ENCODE measurements at regions of chr12 and their contacts with region 1.

Region 1: DNA sequence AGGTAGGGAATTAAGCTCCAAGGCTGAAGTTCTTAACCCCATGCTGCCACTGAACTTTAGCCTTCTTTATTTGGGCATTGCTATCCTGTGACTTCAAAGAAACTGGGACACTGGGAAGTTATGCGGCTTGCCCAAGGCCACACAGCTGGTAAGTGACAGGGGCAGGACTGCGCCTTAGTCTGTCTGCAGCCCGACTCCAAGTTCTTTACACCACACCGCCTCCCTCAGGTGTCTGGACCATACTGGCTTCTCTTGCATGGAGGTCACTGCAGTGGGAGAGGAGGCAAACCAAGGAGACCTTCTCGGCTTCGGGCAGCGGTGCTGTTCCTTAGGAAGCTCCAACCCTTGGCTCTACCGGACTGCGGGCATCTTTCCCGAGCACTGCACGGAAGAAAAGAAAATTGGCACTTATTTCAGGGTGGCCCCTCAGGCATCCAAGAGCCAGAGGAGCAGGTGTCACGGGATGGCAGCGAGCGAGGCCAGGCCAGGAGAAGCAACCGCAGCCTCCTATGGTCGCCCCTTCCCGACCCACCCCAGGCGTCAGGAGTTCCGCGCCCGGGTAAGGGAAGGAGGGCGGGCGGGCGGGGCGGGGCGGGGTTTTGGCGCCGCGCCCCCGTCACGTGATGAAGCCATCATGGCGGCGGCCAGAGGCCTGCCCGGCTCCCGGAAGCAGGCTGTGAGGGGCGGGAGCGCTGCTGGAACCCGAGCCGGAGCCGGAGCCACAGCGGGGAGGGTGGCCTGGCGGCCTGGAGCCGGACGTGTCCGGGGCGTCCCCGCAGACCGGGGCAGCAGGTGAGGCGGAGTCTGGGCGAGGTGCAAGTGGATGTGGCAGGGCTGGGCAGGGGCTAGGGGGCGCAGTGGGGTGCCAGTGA is 16.4 kb upstream of the ESPL1 start:
- DNase-seq: peak; percentile 79
- H3K4me3 Mint-ChIP-seq: peak overlapping the region; percentile 97
- H3K27ac Mint-ChIP-seq: peak overlapping the region; percentile 81
- H3K4me1 Mint-ChIP-seq: peaks cover 52% of the 10 kb centered on the region
- H3K27me3 Mint-ChIP-seq: no peaks in the 10 kb centered on the region

Region 2: DNA sequence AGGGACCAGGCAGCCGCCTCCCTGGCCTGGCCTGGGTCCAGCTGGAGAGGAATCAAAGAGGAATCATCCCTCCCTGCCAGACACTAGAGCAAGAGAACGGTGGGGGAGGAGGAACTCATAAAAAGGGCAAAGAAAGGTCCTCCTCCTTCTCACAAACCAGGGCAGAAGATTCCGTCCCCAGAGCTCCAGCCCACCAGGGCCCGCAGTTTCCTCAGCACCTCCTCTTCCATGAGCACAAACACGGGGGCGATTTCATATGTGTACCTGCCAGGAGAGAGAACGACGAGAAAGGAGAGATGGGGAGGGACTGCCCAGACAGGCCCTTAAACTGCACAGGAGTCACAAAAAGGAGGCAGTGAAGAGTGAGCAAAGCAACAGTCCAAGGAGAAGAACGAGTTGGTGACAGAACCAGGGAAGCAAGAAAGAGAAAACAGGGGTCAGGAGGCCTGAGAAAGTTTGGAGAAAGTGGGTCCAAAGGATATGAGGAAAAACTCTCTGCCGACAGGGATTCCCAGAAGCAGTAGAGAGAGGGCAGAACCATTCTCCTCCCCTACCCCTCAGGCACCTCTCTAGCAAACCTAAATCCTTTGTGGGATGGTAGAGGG is 79.9 kb before region 1 on chr12:
- CTCF ChIA-PET with region 1: no interaction called
- POLR2A ChIA-PET with region 1: no interaction called
- DNase-seq: peak; percentile 1
- H3K4me3 Mint-ChIP-seq: no peak overlapping the region
- H3K27ac Mint-ChIP-seq: no peak overlapping the region
- H3K4me1 Mint-ChIP-seq: peaks cover 10% of the 10 kb centered on the region
- H3K27me3 Mint-ChIP-seq: no peaks in the 10 kb centered on the region

Region 3: DNA sequence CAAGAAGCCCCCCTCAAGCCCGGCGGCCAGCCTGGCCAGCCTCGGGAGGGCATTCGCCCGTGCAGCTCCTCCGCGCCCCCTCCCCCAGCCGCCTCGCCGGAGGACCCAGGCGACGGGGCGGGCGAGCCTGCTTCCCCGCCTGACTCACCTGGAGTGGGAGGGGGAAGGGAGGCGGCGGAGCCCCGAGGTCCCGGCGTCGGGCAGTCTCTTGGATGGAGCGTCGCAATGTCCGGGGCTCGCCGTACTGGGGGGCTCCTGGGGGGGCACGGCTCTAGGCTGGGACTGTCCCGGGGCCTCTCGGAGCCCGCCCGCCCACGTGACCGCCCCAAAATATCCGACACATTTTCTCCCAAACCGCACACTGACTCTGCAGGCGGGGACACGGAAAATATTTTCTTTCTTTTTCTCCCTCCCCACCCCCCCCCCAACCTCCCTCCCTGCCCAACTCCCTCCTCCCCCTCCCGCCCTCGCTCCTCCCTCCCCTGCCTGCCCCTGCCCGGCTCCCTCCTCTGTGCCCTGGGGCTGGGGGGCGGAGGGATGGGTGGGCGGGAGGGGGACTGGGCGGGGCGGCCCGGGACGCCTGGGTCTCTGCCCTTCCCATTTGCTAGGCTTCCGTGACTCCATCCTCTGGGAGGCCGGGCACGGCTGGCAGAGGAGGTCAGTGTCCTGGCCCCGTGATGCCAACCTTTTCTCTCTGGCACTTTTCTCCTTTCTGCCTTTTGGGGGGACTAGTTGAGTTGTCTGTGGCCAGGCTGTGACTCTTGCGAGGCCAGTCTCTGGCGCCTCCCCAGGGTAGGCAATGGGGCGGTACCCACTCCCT is 19.7 kb before region 1 on chr12 and contains the start of gene RARG:
- CTCF ChIA-PET with region 1: interaction called, 12 read pairs
- POLR2A ChIA-PET with region 1: interaction called, 9 read pairs
- DNase-seq: peak; percentile 72
- H3K4me3 Mint-ChIP-seq: peak within 1 kb of the TSS; percentile 83
- H3K27ac Mint-ChIP-seq: peak within 1 kb of the TSS; percentile 79
- H3K4me1 Mint-ChIP-seq: peaks cover 68% of the 10 kb centered on the region
- H3K27me3 Mint-ChIP-seq: no peaks in the 10 kb centered on the region
- total RNA-seq, gene RARG: 46.1 to 47.4 TPM

Measured in activated CD4-positive, alpha-beta memory T cell treated with anti-CD3 and anti-CD28 coated beads, Interleukin-2, amount 10 ng/mL, durations not matched to agents 7 days and 5 days (primary cell).